Ascending aorta (tissue), 2 donors: ENCODE measurements at regions of chr9 and their contacts with region 1.

Region 1: GRCh38 chr9:76704593-76705204 is 59.5 kb upstream of the PCA3 start:
- DNase-seq: no peak
- H3K4me3 ChIP-seq: no peak overlapping the region
- H3K27ac ChIP-seq: no peak overlapping the region
- H3K4me1 ChIP-seq: peaks cover 8 to 25% of the 10 kb centered on the region in 2 donors
- H3K27me3 ChIP-seq: no peaks in the 10 kb centered on the region
- CTCF ChIP-seq: peak; percentile 49 to 66 (median 62)

Region 2: GRCh38 chr9:76403352-76403751 is 301.3 kb before region 1 on chr9:
- intact Hi-C with region 1: loop called (anchors 5 kb)
- DNase-seq: no peak
- H3K4me3 ChIP-seq: peak overlapping the region; percentile 29 to 30
- H3K27ac ChIP-seq: peak overlapping the region; percentile 13 to 27
- H3K4me1 ChIP-seq: peaks cover 3 to 8% of the 10 kb centered on the region in 2 donors
- H3K27me3 ChIP-seq: no peaks in the 10 kb centered on the region
- CTCF ChIP-seq: peak; percentile 43 to 61 (median 57)

Region 3: DNA sequence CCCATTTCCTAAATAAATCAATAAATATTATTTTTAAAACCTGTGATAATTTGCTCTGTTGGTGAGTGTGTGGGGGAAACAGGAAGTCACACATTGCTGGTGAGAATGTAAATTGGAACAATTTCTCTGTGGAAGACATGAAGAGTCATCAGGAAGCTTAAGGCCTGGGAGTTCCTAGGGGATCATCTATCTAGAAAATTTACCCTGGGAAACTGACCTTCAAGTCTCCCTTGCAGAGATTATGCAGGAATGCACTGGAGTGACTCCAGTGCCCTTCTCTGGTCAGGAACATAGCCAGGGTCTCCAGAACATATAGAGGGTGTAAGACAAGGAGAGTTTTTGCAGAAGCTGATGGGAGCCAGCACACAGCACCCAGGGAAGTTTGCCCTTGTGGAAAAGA is 258.7 kb before region 1 on chr9:
- intact Hi-C with region 1: loop called (anchors 2 kb)
- DNase-seq: no peak
- H3K4me3 ChIP-seq: no peak overlapping the region
- H3K27ac ChIP-seq: no peak overlapping the region
- H3K4me1 ChIP-seq: no peaks in the 10 kb centered on the region
- H3K27me3 ChIP-seq: no peaks in the 10 kb centered on the region
- CTCF ChIP-seq: no peak

Region 4: GRCh38 chr9:76651119-76651705 is 53.5 kb before region 1 on chr9:
- intact Hi-C with region 1: no loop called
- DNase-seq: no peak
- H3K4me3 ChIP-seq: peak overlapping the region; percentile 12 to 35
- H3K27ac ChIP-seq: peak overlapping the region; percentile 31 to 54
- H3K4me1 ChIP-seq: peaks cover 0 to 41% of the 10 kb centered on the region in 2 donors
- H3K27me3 ChIP-seq: no peaks in the 10 kb centered on the region
- CTCF ChIP-seq: no peak

Region 5: DNA sequence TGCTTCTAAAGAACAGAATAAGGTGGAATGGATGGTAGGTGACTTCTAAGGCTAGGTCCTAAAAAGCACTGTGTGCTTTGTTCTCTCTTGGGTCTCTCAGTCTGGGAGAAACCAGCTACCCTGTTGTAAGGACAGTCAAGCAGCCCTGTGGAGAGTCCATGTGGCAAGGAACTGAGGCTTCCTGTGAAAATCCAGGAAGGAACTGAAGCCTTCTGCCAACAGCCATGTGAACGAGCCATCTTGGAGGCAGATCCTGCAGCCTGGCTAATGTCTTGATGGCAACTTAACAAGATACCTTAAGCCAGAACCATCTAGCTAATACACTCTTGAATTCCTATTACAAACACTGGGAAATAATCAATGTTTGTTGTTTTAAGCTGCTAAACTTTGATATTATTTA is 40.6 kb before region 1 on chr9:
- intact Hi-C with region 1: loop called (anchors 2 kb)
- DNase-seq: no peak
- H3K4me3 ChIP-seq: no peak overlapping the region
- H3K27ac ChIP-seq: no peak overlapping the region
- H3K4me1 ChIP-seq: peaks cover 2 to 12% of the 10 kb centered on the region in 2 donors
- H3K27me3 ChIP-seq: no peaks in the 10 kb centered on the region
- CTCF ChIP-seq: no peak